Caco-2 (cell line): ENCODE measurements at regions of chr5 and their contacts with region 1.

Region 1: DNA sequence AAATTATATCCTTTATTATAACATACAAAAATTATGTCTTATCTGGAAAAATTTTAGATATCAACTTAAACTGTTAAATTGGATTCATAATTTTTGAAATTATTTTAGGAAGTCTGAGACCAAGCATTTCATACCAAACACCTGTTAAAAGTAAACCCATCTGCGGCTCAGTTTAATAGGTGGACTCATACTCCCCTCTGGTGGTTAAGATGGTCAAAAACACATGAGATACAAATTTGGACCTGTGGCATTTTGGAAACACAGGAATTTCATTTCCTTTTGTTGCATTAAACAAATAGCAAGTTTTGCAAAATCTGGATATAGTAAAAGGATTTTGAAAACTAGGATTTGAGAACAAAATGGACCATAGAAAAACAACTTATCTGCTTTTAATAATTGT is 53.7 kb downstream of the RGMB start:
- DNase-seq: peak in 1 of 2 experiments; percentile 56
- H3K4me3 ChIP-seq: no peak overlapping the region
- H3K4me3 Mint-ChIP-seq: no peak overlapping the region
- H3K27ac Mint-ChIP-seq: no peak overlapping the region
- H3K4me1 ChIP-seq: no peaks in the 10 kb centered on the region
- H3K4me1 Mint-ChIP-seq: no peaks in the 10 kb centered on the region
- H3K27me3 ChIP-seq: no peaks in the 10 kb centered on the region
- H3K27me3 Mint-ChIP-seq: no peaks in the 10 kb centered on the region
- CTCF ChIP-seq: peak; percentile 54 to 58

Region 2: GRCh38 chr5:97231025-97231636 is 1596.0 kb before region 1 on chr5:
- CTCF ChIA-PET with region 1: no interaction called
- POLR2A ChIA-PET with region 1: no interaction called
- intact Hi-C with region 1: loop called (anchors 10 kb)
- DNase-seq: peak in 1 of 2 experiments; percentile 72
- H3K4me3 ChIP-seq: no peak overlapping the region
- H3K4me3 Mint-ChIP-seq: no peak overlapping the region
- H3K27ac Mint-ChIP-seq: no peak overlapping the region
- H3K4me1 ChIP-seq: no peaks in the 10 kb centered on the region
- H3K4me1 Mint-ChIP-seq: no peaks in the 10 kb centered on the region
- H3K27me3 ChIP-seq: no peaks in the 10 kb centered on the region
- H3K27me3 Mint-ChIP-seq: no peaks in the 10 kb centered on the region
- CTCF ChIP-seq: peak; percentile 77 to 82

Region 3: GRCh38 chr5:98604721-98605425 is 222.3 kb before region 1 on chr5:
- CTCF ChIA-PET with region 1: no interaction called
- POLR2A ChIA-PET with region 1: no interaction called
- intact Hi-C with region 1: no loop called
- DNase-seq: no peak
- H3K4me3 ChIP-seq: no peak overlapping the region
- H3K4me3 Mint-ChIP-seq: no peak overlapping the region
- H3K27ac Mint-ChIP-seq: no peak overlapping the region
- H3K4me1 ChIP-seq: no peaks in the 10 kb centered on the region
- H3K4me1 Mint-ChIP-seq: no peaks in the 10 kb centered on the region
- H3K27me3 ChIP-seq: no peaks in the 10 kb centered on the region
- H3K27me3 Mint-ChIP-seq: peaks cover 3% of the 10 kb centered on the region
- CTCF ChIP-seq: no peak

Region 4: DNA sequence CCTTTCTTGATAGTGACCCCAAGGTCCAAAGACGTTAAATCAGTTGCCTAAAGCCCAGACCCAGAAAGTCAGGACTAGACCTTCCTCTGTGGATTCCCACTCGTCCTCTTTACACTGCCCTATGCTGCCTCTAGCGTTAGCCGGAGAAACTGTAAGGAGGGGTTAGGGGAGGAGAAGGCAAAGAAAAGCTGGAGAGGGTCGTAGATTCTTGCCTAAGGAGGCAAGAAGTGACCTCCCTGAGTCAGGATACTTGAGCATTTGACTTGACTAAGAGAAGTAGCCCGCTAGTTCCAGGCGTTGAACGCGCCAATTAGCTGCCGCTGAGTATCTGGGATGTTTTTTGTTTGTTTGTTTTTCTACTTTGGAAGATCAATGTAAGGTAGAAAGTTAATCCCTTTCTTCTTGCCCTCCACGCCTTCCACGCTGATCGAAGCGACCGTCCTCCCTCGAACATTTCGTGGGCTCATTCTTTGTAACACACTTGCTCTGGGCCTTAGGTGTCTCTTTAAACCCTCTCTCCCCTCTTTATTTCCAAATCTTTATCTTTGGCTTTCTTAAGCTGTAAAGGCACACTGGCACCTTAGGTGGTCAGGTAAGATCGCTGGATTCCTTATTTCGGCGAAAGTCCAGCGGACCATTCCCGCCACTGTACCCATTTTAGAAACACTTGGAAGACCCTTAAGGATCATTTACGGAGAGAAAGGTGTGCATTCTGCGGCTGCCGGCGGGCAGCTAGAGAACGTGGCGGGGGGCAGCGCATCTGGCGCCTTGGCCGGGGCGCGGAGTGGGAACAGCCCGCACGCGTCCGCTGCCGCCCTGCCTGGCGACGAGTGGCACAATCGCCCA is 58.8 kb before region 1 on chr5:
- CTCF ChIA-PET with region 1: no interaction called
- POLR2A ChIA-PET with region 1: no interaction called
- intact Hi-C with region 1: loop called (anchors 2 kb)
- DNase-seq: peak; percentile 56 to 64
- H3K4me3 ChIP-seq: peak overlapping the region; percentile 46
- H3K4me3 Mint-ChIP-seq: peak overlapping the region; percentile 82
- H3K27ac Mint-ChIP-seq: no peak overlapping the region
- H3K4me1 ChIP-seq: peaks cover 8% of the 10 kb centered on the region
- H3K4me1 Mint-ChIP-seq: peaks cover 9% of the 10 kb centered on the region
- H3K27me3 ChIP-seq: no peaks in the 10 kb centered on the region; the same call in 1 of the 2 replicates
- H3K27me3 Mint-ChIP-seq: no peaks in the 10 kb centered on the region
- CTCF ChIP-seq: peak; percentile 77 to 89